CD4-positive, alpha-beta T cell (primary cell): ENCODE measurements at regions of chr11 and their contacts with region 1.

Region 1: GRCh38 chr11:61161190-61162091 is at the start of gene VPS37C:
- DNase-seq: peak; percentile 78 to 96 (median 89)
- ATAC-seq: peak; percentile 73
- H3K4me3 ChIP-seq: peak within 1 kb of the TSS; percentile 70
- H3K4me3 Mint-ChIP-seq: peak within 1 kb of the TSS; percentile 91
- H3K27ac ChIP-seq: peak within 1 kb of the TSS; percentile 81 to 85
- H3K27ac Mint-ChIP-seq: peak within 1 kb of the TSS; percentile 85
- H3K4me1 ChIP-seq: peaks cover 20% of the 10 kb centered on the region
- H3K4me1 Mint-ChIP-seq: peaks cover 62% of the 10 kb centered on the region
- H3K27me3 ChIP-seq: no peaks in the 10 kb centered on the region
- H3K27me3 Mint-ChIP-seq: no peaks in the 10 kb centered on the region
- CTCF ChIP-seq: no peak
- total RNA-seq, gene VPS37C: 1.8 to 2.0 TPM

Region 2: GRCh38 chr11:60841797-60842667 is 319.4 kb before region 1 on chr11 and contains the start of gene CCDC86:
- CTCF ChIA-PET with region 1: no interaction called
- POLR2A ChIA-PET with region 1: no interaction called
- intact Hi-C with region 1: loop called in 1 of 2 experiments (anchors 2 kb)
- DNase-seq: peak; percentile 96 to 100 (median 98)
- ATAC-seq: peak; percentile 96
- H3K4me3 ChIP-seq: peak within 1 kb of the TSS; percentile 99
- H3K4me3 Mint-ChIP-seq: peak within 1 kb of the TSS; percentile 78
- H3K27ac ChIP-seq: peak within 1 kb of the TSS; percentile 61 to 72
- H3K27ac Mint-ChIP-seq: peak within 1 kb of the TSS; percentile 81
- H3K4me1 ChIP-seq: peaks cover 48% of the 10 kb centered on the region
- H3K4me1 Mint-ChIP-seq: peaks cover 42% of the 10 kb centered on the region
- H3K27me3 ChIP-seq: no peaks in the 10 kb centered on the region
- H3K27me3 Mint-ChIP-seq: no peaks in the 10 kb centered on the region
- CTCF ChIP-seq: no peak
- total RNA-seq, gene CCDC86: 8.0 to 9.0 TPM